HAP-1 (cell line): ENCODE measurements at regions of chr17 and their contacts with region 1.

Region 1: GRCh38 chr17:22492331-22492730 is 800.0 kb downstream of the KCNJ18 start:
- DNase-seq: no peak
- H3K4me3 ChIP-seq: no peak overlapping the region
- H3K4me1 ChIP-seq: no peaks in the 10 kb centered on the region
- H3K27me3 ChIP-seq: no peaks in the 10 kb centered on the region

Region 2: GRCh38 chr17:22337453-22337852 is 154.9 kb before region 1 on chr17:
- in situ Hi-C with region 1: loop called (anchors 25 kb)
- DNase-seq: no peak
- H3K4me3 ChIP-seq: no peak overlapping the region
- H3K4me1 ChIP-seq: no peaks in the 10 kb centered on the region
- H3K27me3 ChIP-seq: no peaks in the 10 kb centered on the region

Region 3: GRCh38 chr17:22409160-22409751 is 83.1 kb before region 1 on chr17:
- in situ Hi-C with region 1: no loop called
- DNase-seq: no peak
- H3K4me3 ChIP-seq: no peak overlapping the region
- H3K4me1 ChIP-seq: no peaks in the 10 kb centered on the region
- H3K27me3 ChIP-seq: no peaks in the 10 kb centered on the region